ENCODE measurements at regions of chr3 and their contacts with region 1.

Region 1: DNA sequence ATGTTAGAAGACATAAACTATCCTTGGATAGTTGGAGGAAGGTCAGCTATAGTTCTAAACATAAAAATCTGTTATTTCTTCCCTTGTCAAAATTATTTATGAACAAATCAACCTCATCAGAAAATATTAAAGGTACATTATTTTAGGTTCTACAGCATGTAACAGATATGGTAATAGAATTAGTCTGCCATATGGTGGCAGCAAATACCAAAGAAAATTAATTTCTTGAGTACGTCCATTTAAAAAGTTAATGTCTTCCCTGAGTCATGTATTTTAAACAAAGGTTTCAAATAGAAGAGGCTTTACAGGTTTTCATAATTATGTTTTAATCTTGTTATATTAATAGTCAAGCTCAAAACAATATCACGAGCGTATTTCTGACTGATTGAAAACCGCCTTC is 17.9 kb upstream of the ANKRD28 start:
- DNase-seq: no peak

Region 2: DNA sequence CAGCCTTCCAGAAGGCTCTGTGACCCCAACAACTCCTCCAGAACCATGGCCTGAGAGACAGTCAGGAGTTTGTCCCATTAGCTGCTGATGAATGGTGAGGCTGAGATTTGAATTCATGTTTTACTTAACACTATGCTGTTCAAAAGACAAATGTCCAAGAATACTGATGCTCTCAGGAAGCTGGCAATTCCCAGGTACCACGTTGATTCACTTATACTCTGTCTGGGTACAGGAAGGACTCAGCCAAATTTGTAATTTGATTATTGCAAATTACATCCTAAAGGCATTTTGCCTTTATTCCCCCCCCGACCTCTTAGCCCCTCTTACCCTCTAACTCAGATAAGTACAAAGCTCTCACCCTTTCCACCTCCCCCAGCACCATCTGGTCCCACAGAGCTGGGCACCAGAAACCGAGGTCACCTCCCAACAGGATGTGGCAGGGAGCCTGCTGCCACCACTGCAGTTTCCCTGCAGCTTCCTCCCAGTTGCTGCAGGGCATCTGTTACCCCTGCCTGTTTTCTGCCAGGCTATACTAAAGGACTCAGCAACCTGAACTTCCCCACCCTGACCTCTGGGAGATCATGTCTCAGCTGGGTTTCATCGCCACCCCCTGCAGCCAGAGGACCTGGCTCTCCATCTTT is 354.7 kb before region 1 on chr3:
- in situ Hi-C with region 1: no loop called
- DNase-seq: peak; percentile 26

Region 3: GRCh38 chr3:15629860-15630597 is 185.7 kb before region 1 on chr3:
- in situ Hi-C with region 1: loop called (anchors 25 kb)
- DNase-seq: peak; percentile 74

Region 4: DNA sequence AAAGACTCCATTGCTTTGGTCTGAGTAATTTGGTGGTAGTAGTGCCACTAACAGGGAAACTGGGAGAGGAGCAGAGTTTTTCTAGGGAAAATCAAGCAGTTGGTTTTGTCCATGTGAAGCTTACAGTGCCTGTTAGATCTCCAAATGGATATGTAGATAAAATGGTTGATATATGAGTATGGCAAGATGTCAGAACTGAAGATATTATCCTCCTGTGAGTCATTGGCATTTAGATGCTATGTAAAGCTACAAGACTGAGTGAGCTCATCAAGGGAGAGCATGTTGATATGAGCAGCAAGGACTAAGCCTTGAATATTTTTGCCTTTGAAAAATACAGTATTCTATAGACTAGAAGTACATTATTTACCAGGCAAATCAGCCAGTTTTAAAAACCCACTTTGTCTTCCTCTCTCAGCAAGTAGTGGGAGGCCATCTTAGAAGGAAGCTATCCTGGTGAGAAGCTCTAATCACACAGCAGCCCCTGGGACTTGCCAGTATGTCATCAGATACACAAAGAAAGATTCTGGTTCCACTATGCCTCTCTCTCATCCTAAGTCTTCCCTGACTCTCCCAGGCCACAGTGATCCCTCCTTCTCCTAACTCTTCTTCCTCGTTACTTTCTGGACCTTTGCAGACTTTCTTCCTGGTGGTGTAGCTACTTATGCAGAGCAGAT is 59.5 kb after region 1 on chr3:
- in situ Hi-C with region 1: no loop called
- DNase-seq: no peak